Right ventricle myocardium inferior (tissue), 1 donor: ENCODE measurements at regions of chr12 and their contacts with region 1.

Region 1: GRCh38 chr12:78824918-78825317 is 39.7 kb upstream of the SYT1 start:
- DNase-seq: no peak
- ATAC-seq: no peak

Region 2: DNA sequence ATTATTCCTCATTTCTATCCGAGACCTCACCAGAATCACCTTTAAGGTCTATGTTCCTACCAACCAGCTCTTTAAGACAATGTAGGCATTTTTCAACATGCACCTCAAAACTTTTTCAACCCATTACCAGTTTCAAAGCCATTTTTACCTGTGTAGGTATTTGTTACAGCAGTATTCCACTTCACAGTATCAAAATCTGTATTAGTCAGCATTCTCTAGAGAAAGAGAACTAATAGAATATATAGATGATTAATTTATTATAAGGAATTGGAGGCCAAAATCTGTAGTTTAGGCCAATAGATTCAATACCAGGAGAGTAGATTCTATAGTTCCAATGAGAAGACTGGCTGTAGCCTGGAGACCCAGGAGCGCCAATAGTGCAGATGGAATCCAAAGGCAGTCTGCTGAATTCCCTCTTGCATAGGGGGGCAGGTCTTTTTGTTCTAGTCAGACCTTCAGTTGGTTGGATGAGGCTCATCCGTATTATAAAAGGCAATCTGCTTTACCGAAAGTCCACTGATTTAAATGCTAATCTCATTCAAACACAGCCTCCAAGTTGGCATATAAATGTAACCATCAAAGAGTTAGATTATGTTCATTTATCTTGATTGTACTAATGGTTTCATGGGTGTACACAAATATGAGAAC is 112.0 kb before region 1 on chr12:
- intact Hi-C with region 1: no loop called
- DNase-seq: no peak
- ATAC-seq: no peak

Region 3: GRCh38 chr12:78793491-78793890 is 31.4 kb before region 1 on chr12:
- intact Hi-C with region 1: no loop called
- DNase-seq: no peak
- ATAC-seq: no peak

Region 4: DNA sequence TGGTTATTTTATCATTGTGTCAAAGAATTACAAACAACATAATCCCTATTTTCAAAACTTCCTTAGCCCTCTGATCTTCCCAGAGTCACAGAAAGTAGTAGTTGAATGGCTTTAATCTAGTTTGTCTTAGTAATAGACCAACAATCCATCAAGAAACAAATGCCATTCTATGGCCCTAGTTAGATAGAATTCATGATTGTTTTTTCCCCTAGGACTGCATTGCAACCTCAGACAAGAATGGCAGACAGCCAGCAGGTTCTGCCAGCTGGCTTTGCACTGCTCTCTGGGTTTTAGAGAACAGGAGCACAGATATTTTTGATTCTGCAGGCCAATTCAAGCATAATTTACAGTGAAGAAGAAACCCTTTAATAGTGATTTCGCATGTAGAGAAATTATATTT is 73.5 kb after region 1 on chr12:
- intact Hi-C with region 1: no loop called
- DNase-seq: peak; percentile 65
- ATAC-seq: peak; percentile 48

Region 5: GRCh38 chr12:79168687-79169086 is 343.8 kb after region 1 on chr12:
- intact Hi-C with region 1: loop called (anchors 5 kb)
- DNase-seq: no peak
- ATAC-seq: no peak